Panc1 (cell line): ENCODE measurements at regions of chr19 and their contacts with region 1.

Region 1: GRCh38 chr19:39532233-39533002 is at the start of gene EID2B:
- DNase-seq: peak; percentile 100
- ATAC-seq: peak; percentile 95
- H3K4me3 ChIP-seq: peak within 1 kb of the TSS; percentile 35 to 56
- H3K27ac ChIP-seq: peak within 1 kb of the TSS; percentile 80
- H3K4me1 ChIP-seq: peaks cover 25% of the 10 kb centered on the region
- H3K27me3 ChIP-seq: no peaks in the 10 kb centered on the region
- CTCF ChIP-seq: no peak
- total RNA-seq, gene EID2B: 37.7 TPM

Region 2: DNA sequence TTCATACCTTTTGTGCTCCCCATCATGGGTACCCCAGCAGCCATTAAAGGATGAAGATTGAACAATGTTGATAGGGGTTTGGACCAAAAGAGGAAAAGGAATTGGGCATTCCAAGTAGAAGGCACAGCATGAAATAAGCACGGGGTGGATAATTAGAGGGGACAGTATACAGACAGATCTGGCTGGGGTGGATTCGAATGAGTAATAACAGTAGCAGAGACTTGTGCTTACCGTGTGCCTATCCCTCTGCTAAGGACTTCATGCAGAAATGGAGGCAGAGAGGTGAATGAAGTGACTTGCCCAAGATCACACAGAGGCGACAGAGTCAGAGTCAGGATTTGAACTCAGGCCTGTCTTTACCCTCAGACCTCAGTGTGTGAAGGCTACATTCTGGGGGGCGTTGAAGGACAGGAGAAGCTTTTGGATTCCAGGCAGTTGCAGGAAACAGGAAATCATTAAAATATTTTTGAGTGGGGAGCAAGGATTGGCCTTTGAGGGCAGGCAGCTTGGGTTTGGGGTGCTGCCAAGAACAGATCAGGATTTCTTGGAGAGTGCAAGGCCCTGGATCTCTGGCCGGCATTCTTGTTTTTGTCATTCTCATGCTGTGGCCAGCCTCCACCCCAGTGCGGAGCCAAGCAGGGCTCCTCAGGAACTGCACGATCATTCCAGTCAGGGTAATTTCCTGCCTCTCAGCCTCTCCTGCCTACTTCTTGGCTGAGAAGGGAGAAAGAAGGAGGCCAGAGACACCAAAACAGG is 160.2 kb before region 1 on chr19:
- CTCF ChIA-PET with region 1: no interaction called
- POLR2A ChIA-PET with region 1: interaction called, 21 read pairs
- in situ Hi-C with region 1: no loop called
- intact Hi-C with region 1: no loop called
- DNase-seq: no peak
- ATAC-seq: peak; percentile 2
- H3K4me3 ChIP-seq: no peak overlapping the region
- H3K27ac ChIP-seq: no peak overlapping the region
- H3K4me1 ChIP-seq: no peaks in the 10 kb centered on the region
- H3K27me3 ChIP-seq: no peaks in the 10 kb centered on the region
- CTCF ChIP-seq: no peak

Region 3: GRCh38 chr19:39474139-39474622 is 58.2 kb before region 1 on chr19:
- CTCF ChIA-PET with region 1: interaction called, 134 read pairs
- POLR2A ChIA-PET with region 1: interaction called, 10 read pairs
- in situ Hi-C with region 1: no loop called
- intact Hi-C with region 1: loop called (anchors 1 kb)
- DNase-seq: no peak
- ATAC-seq: peak; percentile 75
- H3K4me3 ChIP-seq: no peak overlapping the region
- H3K27ac ChIP-seq: no peak overlapping the region
- H3K4me1 ChIP-seq: no peaks in the 10 kb centered on the region
- H3K27me3 ChIP-seq: no peaks in the 10 kb centered on the region
- CTCF ChIP-seq: no peak

Region 4: DNA sequence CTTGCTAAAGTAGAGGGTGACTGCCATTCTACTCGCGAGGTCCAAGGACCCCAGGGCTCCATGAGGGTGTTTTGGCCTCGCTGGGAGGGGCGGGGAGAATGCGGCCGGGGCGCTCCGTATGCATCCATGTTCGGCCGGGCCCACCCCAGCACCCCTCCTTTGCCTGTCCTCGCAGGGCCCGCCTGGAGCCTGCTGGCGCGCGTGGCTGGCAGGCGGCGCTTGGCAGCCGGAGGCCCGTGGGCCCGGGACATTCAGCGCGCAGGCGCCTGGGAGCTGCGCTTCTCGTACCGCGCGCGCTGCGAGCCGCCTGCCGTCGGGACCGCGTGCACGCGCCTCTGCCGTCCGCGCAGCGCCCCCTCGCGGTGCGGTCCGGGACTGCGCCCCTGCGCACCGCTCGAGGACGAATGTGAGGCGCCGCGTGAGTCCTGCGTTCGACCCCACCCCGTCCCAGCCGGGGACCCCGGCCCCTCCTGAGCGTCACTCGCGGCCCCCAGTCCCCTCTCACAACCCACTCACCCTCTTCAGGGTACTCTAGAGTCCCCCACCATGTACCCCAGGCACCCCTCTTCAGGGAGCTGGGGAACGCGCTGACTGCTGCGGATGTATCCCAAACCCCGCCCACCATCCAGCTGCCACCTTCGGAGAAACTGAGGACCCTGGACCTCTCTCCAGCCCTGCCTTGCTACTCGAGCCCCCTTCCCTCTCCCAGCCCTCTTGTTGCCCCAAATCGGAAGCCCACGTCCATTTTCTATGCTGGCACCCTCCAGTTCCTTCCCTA is 29.6 kb before region 1 on chr19:
- CTCF ChIA-PET with region 1: interaction called, 130 read pairs
- POLR2A ChIA-PET with region 1: interaction called, 18 read pairs
- in situ Hi-C with region 1: no loop called
- intact Hi-C with region 1: loop called (anchors 2 kb)
- DNase-seq: peak; percentile 93
- ATAC-seq: peak; percentile 24
- H3K4me3 ChIP-seq: peak overlapping the region in 1 of 2 experiments; percentile 34; a peak in 2 of 4 replicates
- H3K27ac ChIP-seq: peak overlapping the region; percentile 3; the same call in 1 of the 2 replicates
- H3K4me1 ChIP-seq: peaks cover 27% of the 10 kb centered on the region
- H3K27me3 ChIP-seq: peaks cover 8% of the 10 kb centered on the region
- CTCF ChIP-seq: no peak

Region 5: GRCh38 chr19:39607026-39607425 is 74.6 kb after region 1 on chr19:
- CTCF ChIA-PET with region 1: interaction called, 11 read pairs
- POLR2A ChIA-PET with region 1: no interaction called
- in situ Hi-C with region 1: no loop called
- intact Hi-C with region 1: no loop called
- DNase-seq: no peak
- ATAC-seq: no peak
- H3K4me3 ChIP-seq: no peak overlapping the region
- H3K27ac ChIP-seq: no peak overlapping the region
- H3K4me1 ChIP-seq: no peaks in the 10 kb centered on the region
- H3K27me3 ChIP-seq: peaks cover 88% of the 10 kb centered on the region
- CTCF ChIP-seq: peak; percentile 36; the same call in 1 of the 2 replicates

Region 6: DNA sequence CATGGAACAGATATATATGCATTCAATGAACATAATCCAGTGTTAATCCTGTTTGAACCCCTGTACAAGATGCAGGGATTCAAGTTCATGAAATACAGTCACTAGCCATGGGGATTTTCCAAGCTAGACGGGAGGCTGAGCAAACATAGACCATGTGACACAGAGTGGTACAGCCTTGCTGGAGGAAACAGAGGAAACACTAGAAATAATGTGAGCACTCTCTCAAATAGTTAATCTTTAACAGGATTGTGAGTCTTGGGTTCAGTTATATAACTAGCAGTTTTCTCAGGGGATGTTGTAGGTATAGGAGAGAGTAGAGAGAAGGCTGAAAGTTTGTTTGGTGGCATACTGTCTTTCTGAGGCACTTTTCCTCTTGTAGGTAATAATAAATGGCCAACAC is 109.4 kb after region 1 on chr19:
- CTCF ChIA-PET with region 1: no interaction called
- POLR2A ChIA-PET with region 1: no interaction called
- in situ Hi-C with region 1: no loop called
- intact Hi-C with region 1: no loop called
- DNase-seq: no peak
- ATAC-seq: no peak
- H3K4me3 ChIP-seq: no peak overlapping the region
- H3K27ac ChIP-seq: no peak overlapping the region
- H3K4me1 ChIP-seq: no peaks in the 10 kb centered on the region
- H3K27me3 ChIP-seq: peaks cover 86% of the 10 kb centered on the region
- CTCF ChIP-seq: peak; percentile 40; the same call in 1 of the 2 replicates

Region 7: GRCh38 chr19:39778763-39779162 is 246.3 kb after region 1 on chr19 and contains the start of gene LEUTX:
- CTCF ChIA-PET with region 1: interaction called, 10 read pairs
- POLR2A ChIA-PET with region 1: no interaction called
- in situ Hi-C with region 1: no loop called
- intact Hi-C with region 1: no loop called
- DNase-seq: no peak
- ATAC-seq: no peak
- H3K4me3 ChIP-seq: no peak within 1 kb of the TSS
- H3K27ac ChIP-seq: no peak within 1 kb of the TSS
- H3K4me1 ChIP-seq: no peaks in the 10 kb centered on the region
- H3K27me3 ChIP-seq: peaks cover 86% of the 10 kb centered on the region
- CTCF ChIP-seq: no peak
- total RNA-seq, gene LEUTX: not detected